ENCODE measurements at regions of chr20 and their contacts with region 1.

Region 1: DNA sequence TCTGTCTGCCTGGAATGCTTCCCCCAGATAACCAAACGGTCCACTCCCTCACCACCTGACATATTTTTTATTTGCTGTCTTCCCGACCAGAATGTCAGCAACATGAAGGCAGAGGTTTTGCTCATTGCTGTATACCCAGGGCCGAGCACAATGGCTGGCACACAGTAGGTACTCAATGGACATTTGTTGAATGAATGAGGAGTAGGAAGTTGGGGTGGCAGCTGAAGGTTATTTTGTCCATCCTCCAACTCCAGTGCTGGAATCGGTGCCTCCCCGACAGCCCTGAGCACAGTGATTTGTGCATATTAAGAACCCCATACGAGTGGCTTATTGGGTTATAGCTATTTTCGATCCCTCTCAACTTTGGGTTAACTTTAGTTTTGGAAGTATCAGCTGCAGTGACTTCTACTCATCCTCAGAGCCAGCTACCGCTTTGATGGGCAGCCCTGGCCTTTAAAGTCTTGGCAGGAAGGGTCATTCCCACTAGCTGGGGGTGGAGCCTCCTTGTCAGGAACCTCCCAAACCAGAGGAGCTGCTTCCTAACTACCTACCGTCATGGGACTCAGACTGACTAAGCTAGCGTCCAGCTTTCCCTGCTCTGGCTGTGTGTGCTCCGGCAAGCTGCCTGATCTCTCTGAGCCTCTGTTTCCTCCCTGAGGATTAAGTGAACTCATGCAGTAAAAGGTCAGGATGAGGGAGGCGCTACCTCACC is 10.2 kb downstream of the DUSP15 start:
- DNase-seq: no peak
- H3K4me3 ChIP-seq: peak overlapping the region; percentile 72
- H3K27ac ChIP-seq: no peak overlapping the region
- H3K4me1 ChIP-seq: peaks cover 20% of the 10 kb centered on the region
- H3K27me3 ChIP-seq: peaks cover 61% of the 10 kb centered on the region
- CTCF ChIP-seq: no peak

Region 2: GRCh38 chr20:31537890-31538289 is 322.3 kb before region 1 on chr20:
- intact Hi-C with region 1: no loop called
- DNase-seq: no peak
- H3K4me3 ChIP-seq: no peak overlapping the region
- H3K27ac ChIP-seq: no peak overlapping the region
- H3K4me1 ChIP-seq: peaks cover 4% of the 10 kb centered on the region
- H3K27me3 ChIP-seq: no peaks in the 10 kb centered on the region
- CTCF ChIP-seq: no peak

Region 3: GRCh38 chr20:31644701-31645100 is 215.5 kb before region 1 on chr20:
- intact Hi-C with region 1: no loop called
- DNase-seq: no peak
- H3K4me3 ChIP-seq: no peak overlapping the region
- H3K27ac ChIP-seq: no peak overlapping the region
- H3K4me1 ChIP-seq: no peaks in the 10 kb centered on the region
- H3K27me3 ChIP-seq: no peaks in the 10 kb centered on the region
- CTCF ChIP-seq: no peak

Region 4: GRCh38 chr20:31951530-31952453 is 91.6 kb after region 1 on chr20 and contains the start of gene PDRG1:
- intact Hi-C with region 1: loop called (anchors 10 kb)
- DNase-seq: peak; percentile 96
- H3K4me3 ChIP-seq: peak within 1 kb of the TSS; percentile 97
- H3K27ac ChIP-seq: peak within 1 kb of the TSS; percentile 87
- H3K4me1 ChIP-seq: peaks cover 22% of the 10 kb centered on the region
- H3K27me3 ChIP-seq: peaks cover 21% of the 10 kb centered on the region
- CTCF ChIP-seq: peak; percentile 97
- total RNA-seq, gene PDRG1: 10.4 TPM

Region 5: DNA sequence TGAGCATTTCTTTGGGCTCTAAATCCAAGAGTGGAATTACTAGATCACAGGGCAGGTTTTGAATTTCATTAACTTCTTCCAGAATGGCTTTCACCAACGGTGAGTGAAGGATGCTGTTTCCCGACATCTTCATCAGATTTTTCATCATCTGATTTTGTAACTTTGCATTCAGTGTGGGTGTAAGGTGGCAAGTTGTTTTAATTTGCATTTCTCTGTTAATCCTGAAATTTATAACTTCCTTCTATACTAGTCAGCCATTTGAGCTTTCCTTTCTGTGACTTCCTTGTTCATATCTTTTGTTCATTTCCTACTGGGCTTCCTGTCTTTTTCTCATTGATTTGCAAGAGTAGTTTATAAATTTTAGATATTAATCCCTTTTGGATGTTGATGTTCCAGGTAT is 173.2 kb after region 1 on chr20:
- intact Hi-C with region 1: loop called (anchors 2 kb)
- DNase-seq: no peak
- H3K4me3 ChIP-seq: no peak overlapping the region
- H3K27ac ChIP-seq: no peak overlapping the region
- H3K4me1 ChIP-seq: peaks cover 29% of the 10 kb centered on the region
- H3K27me3 ChIP-seq: peaks cover 35% of the 10 kb centered on the region
- CTCF ChIP-seq: no peak

Measured in left ventricle myocardium inferior (tissue), 1 donor.